Activated CD8-positive, alpha-beta memory T cell treated with anti-CD3 and anti-CD28 coated beads, Interleukin-2, amount 10 ng/mL, durations not matched to agents 7 days and 5 days (primary cell): ENCODE measurements at regions of chr15 and their contacts with region 1.

Region 1: DNA sequence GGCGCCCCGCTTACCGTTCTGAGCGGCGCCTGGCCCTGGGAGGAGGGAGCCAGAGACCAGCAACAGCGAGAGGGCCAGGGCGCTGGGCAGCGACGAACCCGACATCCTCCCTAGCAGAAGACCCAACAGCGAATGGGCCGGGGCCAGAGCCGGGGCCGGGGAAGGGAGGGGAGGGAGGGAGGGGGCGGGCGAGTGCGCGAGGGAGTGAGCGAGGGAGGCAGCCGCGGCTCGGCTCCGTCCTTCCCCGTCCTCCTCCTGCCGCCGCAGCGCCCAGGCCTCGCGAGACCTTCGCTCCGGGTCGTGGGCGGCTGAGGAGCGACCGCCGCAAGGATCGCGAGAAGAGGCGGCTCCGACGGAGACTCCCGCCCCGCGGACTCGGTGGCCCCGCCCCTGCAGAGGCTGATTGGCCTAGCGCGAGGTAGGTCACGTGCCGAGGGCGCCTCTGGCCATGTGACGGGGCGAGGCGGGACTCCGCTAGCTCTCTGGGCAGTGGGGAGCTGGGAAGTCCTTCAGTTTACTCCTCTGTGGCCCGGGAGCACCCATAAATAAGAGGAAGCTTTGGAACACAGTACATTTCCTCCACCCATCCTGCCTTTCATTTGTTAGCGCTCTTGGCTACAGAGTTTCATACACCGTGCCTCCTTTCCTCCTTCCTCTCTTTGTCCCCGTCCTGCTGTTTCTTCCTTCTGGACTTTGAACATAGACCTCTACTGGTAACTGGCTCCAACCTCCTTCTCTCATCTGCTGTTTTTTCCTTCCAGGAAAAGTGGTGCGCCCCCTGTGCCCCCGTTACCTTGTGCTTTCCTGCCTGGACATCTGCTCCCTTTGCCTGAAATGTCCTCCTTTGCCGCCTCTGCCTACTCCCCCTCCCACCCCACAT is at the start of gene NPTN:
- DNase-seq: peak; percentile 99
- ATAC-seq: peak; percentile 97
- H3K4me3 Mint-ChIP-seq: peak within 1 kb of the TSS; percentile 74
- H3K27ac Mint-ChIP-seq: peak within 1 kb of the TSS; percentile 70
- H3K4me1 Mint-ChIP-seq: peaks cover 48% of the 10 kb centered on the region
- H3K27me3 Mint-ChIP-seq: peaks cover 27% of the 10 kb centered on the region
- total RNA-seq, gene NPTN: 45.5 to 54.0 TPM

Region 2: GRCh38 chr15:73518876-73519733 is 114.2 kb before region 1 on chr15:
- CTCF ChIA-PET with region 1: no interaction called
- DNase-seq: no peak
- ATAC-seq: no peak
- H3K4me3 Mint-ChIP-seq: no peak overlapping the region
- H3K27ac Mint-ChIP-seq: no peak overlapping the region
- H3K4me1 Mint-ChIP-seq: peaks cover 15% of the 10 kb centered on the region
- H3K27me3 Mint-ChIP-seq: peaks cover 3% of the 10 kb centered on the region

Region 3: GRCh38 chr15:73560501-73561117 is 72.7 kb before region 1 on chr15:
- CTCF ChIA-PET with region 1: interaction called, 117 read pairs
- DNase-seq: no peak
- ATAC-seq: peak; percentile 70
- H3K4me3 Mint-ChIP-seq: no peak overlapping the region
- H3K27ac Mint-ChIP-seq: no peak overlapping the region
- H3K4me1 Mint-ChIP-seq: peaks cover 23% of the 10 kb centered on the region
- H3K27me3 Mint-ChIP-seq: no peaks in the 10 kb centered on the region

Region 4: GRCh38 chr15:73596174-73596573 is 37.2 kb before region 1 on chr15:
- CTCF ChIA-PET with region 1: interaction called, 10 read pairs
- DNase-seq: no peak
- ATAC-seq: no peak
- H3K4me3 Mint-ChIP-seq: no peak overlapping the region
- H3K27ac Mint-ChIP-seq: no peak overlapping the region
- H3K4me1 Mint-ChIP-seq: peaks cover 19% of the 10 kb centered on the region
- H3K27me3 Mint-ChIP-seq: no peaks in the 10 kb centered on the region

Region 5: GRCh38 chr15:73650416-73651126 is 17.2 kb after region 1 on chr15:
- CTCF ChIA-PET with region 1: interaction called, 17 read pairs
- DNase-seq: no peak
- ATAC-seq: peak; percentile 33
- H3K4me3 Mint-ChIP-seq: no peak overlapping the region
- H3K27ac Mint-ChIP-seq: no peak overlapping the region
- H3K4me1 Mint-ChIP-seq: peaks cover 9% of the 10 kb centered on the region
- H3K27me3 Mint-ChIP-seq: peaks cover 49% of the 10 kb centered on the region

Region 6: GRCh38 chr15:73683777-73684580 is 50.6 kb after region 1 on chr15 and contains the start of gene CD276:
- CTCF ChIA-PET with region 1: interaction called, 52 read pairs
- DNase-seq: peak; percentile 36
- ATAC-seq: peak; percentile 60
- H3K4me3 Mint-ChIP-seq: peak within 1 kb of the TSS; percentile 39
- H3K27ac Mint-ChIP-seq: no peak within 1 kb of the TSS
- H3K4me1 Mint-ChIP-seq: peaks cover 9% of the 10 kb centered on the region
- H3K27me3 Mint-ChIP-seq: peaks cover 81% of the 10 kb centered on the region
- total RNA-seq, gene CD276: 3.7 TPM in 1 of 2 experiments, not detected in the other

Region 7: DNA sequence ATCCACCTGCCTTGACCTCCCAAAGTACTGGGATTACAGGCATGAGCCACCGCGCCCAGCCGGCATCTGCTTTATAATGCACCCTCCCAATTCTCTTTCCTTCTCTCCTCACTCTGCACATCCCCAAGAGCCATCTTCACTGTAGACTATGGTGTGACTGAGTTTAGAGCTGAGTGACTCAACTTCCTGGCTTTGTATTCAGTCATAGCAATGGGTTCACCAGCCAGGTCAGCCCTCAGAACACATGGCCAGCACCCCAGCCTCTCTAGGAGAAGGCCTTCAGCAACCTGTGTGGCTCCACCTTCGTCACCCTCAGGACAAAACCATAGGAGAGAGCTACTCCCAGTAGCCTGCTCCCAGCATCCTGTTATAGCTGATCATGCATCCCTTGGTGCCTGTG is 940.6 kb after region 1 on chr15:
- CTCF ChIA-PET with region 1: no interaction called
- DNase-seq: peak; percentile 43
- ATAC-seq: peak; percentile 53
- H3K4me3 Mint-ChIP-seq: no peak overlapping the region
- H3K27ac Mint-ChIP-seq: peak overlapping the region; percentile 51
- H3K4me1 Mint-ChIP-seq: peaks cover 34% of the 10 kb centered on the region
- H3K27me3 Mint-ChIP-seq: no peaks in the 10 kb centered on the region